AG04449 (cell line): ENCODE measurements at regions of chr12 and their contacts with region 1.

Region 1: DNA sequence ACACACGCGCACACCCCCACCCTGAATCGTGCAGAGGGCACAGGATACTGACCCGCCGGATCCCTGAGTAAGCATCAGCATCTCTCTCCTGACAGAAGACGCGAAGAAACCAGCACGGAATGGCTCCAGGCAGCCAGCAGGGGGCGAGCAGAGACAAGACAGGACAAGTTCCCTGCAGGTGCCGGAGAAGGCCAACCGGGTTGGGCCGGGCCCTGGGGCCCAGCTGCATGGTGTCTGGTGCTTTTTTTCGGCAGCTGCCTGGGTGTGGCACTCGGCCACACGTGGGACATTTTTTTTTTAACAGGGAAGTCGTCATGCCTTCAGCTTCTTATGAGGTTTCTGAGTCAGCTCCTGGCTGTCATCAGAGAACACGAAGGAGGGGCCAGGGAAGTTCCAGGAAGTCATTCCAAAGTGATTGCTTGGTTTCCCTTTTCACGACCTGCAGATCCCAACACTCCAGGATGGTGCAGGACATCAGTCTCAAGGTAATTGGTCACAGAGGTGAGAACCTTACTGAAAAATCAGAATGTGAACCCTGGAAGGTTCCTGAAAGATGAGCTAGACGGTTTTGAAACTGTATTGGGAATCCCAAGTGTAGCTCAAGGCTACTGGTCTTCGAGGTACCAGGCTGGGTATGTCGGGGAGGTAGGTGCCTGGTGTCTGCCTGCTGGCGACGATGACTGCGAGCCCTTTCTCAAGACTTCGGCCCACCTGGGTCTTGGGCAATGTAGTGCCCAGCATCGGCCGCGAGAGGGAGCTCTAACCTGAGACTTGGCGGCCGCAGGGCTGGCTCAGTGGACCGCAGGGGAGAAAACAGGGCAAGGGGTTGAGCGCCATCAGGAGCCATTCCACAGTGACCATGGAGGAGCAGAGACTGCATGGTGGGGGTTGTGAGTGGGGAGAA is 190.8 kb upstream of the PRMT8 start:
- DNase-seq: peak; percentile 70
- H3K4me3 ChIP-seq: peak overlapping the region; percentile 32
- CTCF ChIP-seq: peak; percentile 94

Region 2: GRCh38 chr12:3275171-3276041 is 24.8 kb before region 1 on chr12:
- CTCF ChIA-PET with region 1: interaction called, 50 read pairs
- POLR2A ChIA-PET with region 1: no interaction called
- DNase-seq: no peak
- H3K4me3 ChIP-seq: no peak overlapping the region
- CTCF ChIP-seq: peak; percentile 95

Region 3: DNA sequence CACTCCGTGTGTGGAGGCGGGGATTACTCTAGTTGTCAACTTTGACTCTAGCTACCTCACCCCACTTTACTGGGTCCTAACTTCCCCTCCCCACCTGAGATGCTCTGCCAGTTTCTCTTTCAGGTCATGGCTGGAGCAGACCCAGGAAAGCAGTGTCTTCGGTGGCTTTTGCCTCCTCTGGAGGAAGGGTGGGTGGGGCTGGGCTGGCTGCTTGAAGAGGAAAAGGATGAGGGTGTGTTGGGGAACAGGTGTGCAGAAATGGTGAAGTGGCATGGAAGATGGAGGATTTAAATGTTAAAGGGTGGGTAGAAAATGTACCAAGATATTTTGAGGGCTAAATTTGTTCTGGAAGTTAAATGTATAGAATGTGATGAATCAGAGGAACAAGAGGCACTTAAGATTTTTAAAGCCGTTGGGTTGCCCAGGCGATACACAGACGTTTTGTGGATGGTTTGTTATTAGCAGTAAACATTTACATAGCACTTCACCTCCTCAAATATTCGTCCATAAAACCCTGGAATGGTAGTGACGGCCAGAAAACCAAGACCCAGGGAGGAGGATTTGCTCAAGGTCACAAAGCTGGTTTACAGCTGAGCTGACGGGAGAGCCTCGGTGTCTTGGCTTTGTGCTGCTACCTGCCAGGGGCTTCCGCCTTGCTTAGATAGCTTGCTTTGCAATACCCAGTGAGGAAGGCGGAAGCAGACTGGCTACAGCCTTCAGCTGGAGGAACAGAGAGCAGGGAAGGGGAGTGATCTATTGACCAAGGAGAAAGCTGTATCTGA is 118.6 kb after region 1 on chr12:
- CTCF ChIA-PET with region 1: no interaction called
- POLR2A ChIA-PET with region 1: no interaction called
- DNase-seq: no peak
- H3K4me3 ChIP-seq: no peak overlapping the region
- CTCF ChIP-seq: no peak

Region 4: DNA sequence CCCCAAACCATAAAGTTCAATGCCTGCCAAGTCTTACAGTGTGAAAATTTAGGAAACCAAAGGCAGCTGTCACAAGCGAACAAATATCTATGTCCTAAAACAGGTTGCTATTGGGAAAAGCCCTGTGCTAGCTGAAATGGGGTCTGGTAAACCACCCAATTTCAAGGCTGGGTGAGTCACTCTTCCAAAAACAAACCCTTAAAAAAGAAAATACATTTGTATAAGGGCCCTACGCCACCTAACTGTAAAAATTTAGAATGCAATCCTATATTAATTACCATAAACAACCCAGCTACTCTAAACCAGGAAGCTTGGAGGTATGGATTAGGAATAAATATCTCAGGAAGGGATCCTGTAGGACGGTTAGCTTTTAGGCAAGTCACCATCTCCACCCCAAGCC is 222.9 kb after region 1 on chr12:
- CTCF ChIA-PET with region 1: interaction called, 18 read pairs
- POLR2A ChIA-PET with region 1: no interaction called
- DNase-seq: no peak
- H3K4me3 ChIP-seq: no peak overlapping the region
- CTCF ChIP-seq: no peak

Region 5: GRCh38 chr12:3698218-3698974 is 398.2 kb after region 1 on chr12:
- CTCF ChIA-PET with region 1: interaction called, 14 read pairs
- POLR2A ChIA-PET with region 1: no interaction called
- DNase-seq: peak; percentile 64
- H3K4me3 ChIP-seq: no peak overlapping the region
- CTCF ChIP-seq: no peak

Region 6: GRCh38 chr12:3791256-3792252 is 491.4 kb after region 1 on chr12:
- CTCF ChIA-PET with region 1: interaction called, 32 read pairs
- POLR2A ChIA-PET with region 1: no interaction called
- DNase-seq: no peak
- H3K4me3 ChIP-seq: no peak overlapping the region
- CTCF ChIP-seq: no peak

Region 7: DNA sequence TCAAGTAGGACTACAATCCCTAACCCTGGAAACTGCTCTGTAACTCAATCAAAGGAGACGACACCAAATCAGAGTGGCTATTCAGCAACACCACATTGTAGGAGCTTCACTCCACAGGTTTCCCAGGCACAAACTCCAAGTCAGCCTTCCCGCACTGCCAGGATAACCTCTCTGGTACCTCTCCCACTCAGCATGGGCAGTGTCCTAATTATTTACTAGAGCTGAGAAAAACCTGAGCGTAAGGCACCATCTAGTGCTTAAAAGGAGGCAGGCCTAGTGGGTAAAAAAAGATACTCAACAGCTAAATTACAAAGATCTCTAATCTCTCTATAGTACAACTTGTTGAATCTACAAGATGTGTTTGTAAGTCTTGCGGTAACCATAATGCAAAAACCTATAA is 536.9 kb after region 1 on chr12:
- CTCF ChIA-PET with region 1: interaction called, 11 read pairs
- POLR2A ChIA-PET with region 1: no interaction called
- DNase-seq: no peak
- H3K4me3 ChIP-seq: no peak overlapping the region
- CTCF ChIP-seq: no peak